ENCODE measurements at regions of chr4 and their contacts with region 1.

Region 1: GRCh38 chr4:88378691-88379559 is at the start of gene HERC6:
- DNase-seq: peak; percentile 75 to 85
- H3K4me3 ChIP-seq: peak within 1 kb of the TSS; percentile 84 to 99
- H3K27ac ChIP-seq: peak within 1 kb of the TSS; percentile 98 to 99
- H3K4me1 ChIP-seq: no peaks in the 10 kb centered on the region
- H3K27me3 ChIP-seq: no peaks in the 10 kb centered on the region
- CTCF ChIP-seq: peak; percentile 68 to 88 (median 76)
- POLR2A ChIP-seq: peak in 1 of 2 donors; percentile 27
- total RNA-seq, gene HERC6: 3.5 to 27.6 (median 11.4) TPM

Region 2: GRCh38 chr4:88196013-88196365 is 182.9 kb before region 1 on chr4:
- intact Hi-C with region 1: no loop called
- DNase-seq: no peak
- H3K4me3 ChIP-seq: no peak overlapping the region
- H3K27ac ChIP-seq: no peak overlapping the region
- H3K4me1 ChIP-seq: no peaks in the 10 kb centered on the region
- H3K27me3 ChIP-seq: no peaks in the 10 kb centered on the region
- CTCF ChIP-seq: no peak
- POLR2A ChIP-seq: no peak

Region 3: GRCh38 chr4:88456757-88457306 is 77.9 kb after region 1 on chr4 and contains the start of gene HERC5:
- intact Hi-C with region 1: loop called (anchors 10 kb)
- DNase-seq: peak; percentile 90 to 93
- H3K4me3 ChIP-seq: peak within 1 kb of the TSS; percentile 52 to 79
- H3K27ac ChIP-seq: peak within 1 kb of the TSS; percentile 89 to 96
- H3K4me1 ChIP-seq: no peaks in the 10 kb centered on the region
- H3K27me3 ChIP-seq: no peaks in the 10 kb centered on the region
- CTCF ChIP-seq: peak; percentile 70 to 85 (median 79)
- POLR2A ChIP-seq: peak; percentile 80 to 81
- total RNA-seq, gene HERC5: 4.3 to 23.7 (median 10.6) TPM

Region 4: GRCh38 chr4:88591787-88592599 is 213.1 kb after region 1 on chr4 and contains the start of gene HERC3:
- intact Hi-C with region 1: no loop called
- DNase-seq: peak; percentile 86 to 92
- H3K4me3 ChIP-seq: peak within 1 kb of the TSS; percentile 83 to 86
- H3K27ac ChIP-seq: peak within 1 kb of the TSS; percentile 92 to 96
- H3K4me1 ChIP-seq: peaks cover 0 to 5% of the 10 kb centered on the region in 2 donors
- H3K27me3 ChIP-seq: no peaks in the 10 kb centered on the region
- CTCF ChIP-seq: peak in 1 of 4 experiments; percentile 21
- POLR2A ChIP-seq: peak; percentile 38 to 60
- total RNA-seq, gene HERC3: 20.6 to 54.8 (median 37.0) TPM